Heart right ventricle (tissue), 16 donors: ENCODE measurements at regions of chr6 and their contacts with region 1.

Region 1: GRCh38 chr6:116349216-116349615 is 21.5 kb upstream of the DSE start:
- DNase-seq: no peak
- ATAC-seq: no peak
- H3K4me3 ChIP-seq: no peak overlapping the region
- H3K27ac ChIP-seq: no peak overlapping the region
- H3K4me1 ChIP-seq: peaks cover 0 to 27% (median 16%) of the 10 kb centered on the region in 9 donors
- H3K27me3 ChIP-seq: no peaks in the 10 kb centered on the region
- CTCF ChIP-seq: no peak

Region 2: DNA sequence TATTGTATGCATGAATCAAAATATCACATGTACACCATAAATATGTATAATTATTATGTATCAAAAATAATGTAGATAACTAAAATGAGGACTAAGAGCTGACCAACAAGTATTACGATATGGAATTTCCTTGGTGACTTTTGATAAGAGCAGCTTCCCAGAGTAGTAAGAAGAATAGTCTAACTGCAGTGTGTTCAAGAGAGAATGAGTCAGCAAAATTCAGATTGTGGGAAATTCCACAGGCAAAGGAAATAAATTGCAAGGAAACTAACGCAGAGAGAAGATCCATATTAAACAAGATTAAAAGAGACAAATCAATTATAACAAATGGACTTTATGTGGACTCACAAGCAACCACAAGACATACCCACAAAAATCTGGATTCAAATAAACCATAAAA is 314.9 kb before region 1 on chr6:
- intact Hi-C with region 1: no loop called
- DNase-seq: no peak
- ATAC-seq: peak in 3 of 8 donors; percentile 38 to 49 (median 42)
- H3K4me3 ChIP-seq: no peak overlapping the region
- H3K27ac ChIP-seq: peak overlapping the region in 1 of 10 donors; percentile 27
- H3K4me1 ChIP-seq: peaks cover 0 to 50% (median 22%) of the 10 kb centered on the region in 9 donors
- H3K27me3 ChIP-seq: no peaks in the 10 kb centered on the region
- CTCF ChIP-seq: no peak

Region 3: GRCh38 chr6:116268589-116269293 is 80.5 kb before region 1 on chr6:
- intact Hi-C with region 1: no loop called
- DNase-seq: no peak
- ATAC-seq: peak in 5 of 8 donors; percentile 55 to 80 (median 68)
- H3K4me3 ChIP-seq: no peak overlapping the region
- H3K27ac ChIP-seq: no peak overlapping the region
- H3K4me1 ChIP-seq: peaks cover 0 to 20% (median 6%) of the 10 kb centered on the region in 9 donors
- H3K27me3 ChIP-seq: no peaks in the 10 kb centered on the region
- CTCF ChIP-seq: peak; percentile 39 to 87 (median 66)

Region 4: DNA sequence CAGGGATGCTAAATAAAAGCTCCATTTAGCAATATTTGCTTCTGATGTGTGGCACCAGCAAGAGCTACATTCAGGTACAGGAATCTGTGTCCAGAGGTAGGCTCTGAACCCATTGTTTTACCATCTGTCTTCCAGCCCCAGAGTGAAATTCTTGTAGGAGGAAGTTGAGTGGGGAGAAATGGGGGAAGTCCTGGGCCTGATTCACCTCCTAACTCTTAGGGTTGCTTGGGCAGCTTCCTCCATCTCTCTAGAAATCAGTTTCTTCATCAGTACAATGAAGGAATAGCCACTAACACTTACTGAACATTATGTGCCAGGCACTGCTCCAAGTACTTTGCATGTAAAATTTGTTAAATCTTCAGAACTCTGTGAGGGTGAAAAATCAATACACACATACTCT is 34.3 kb before region 1 on chr6:
- intact Hi-C with region 1: loop called in 1 of 10 experiments (anchors 1 kb)
- DNase-seq: no peak
- ATAC-seq: peak in 2 of 8 donors; percentile 43 to 69
- H3K4me3 ChIP-seq: no peak overlapping the region
- H3K27ac ChIP-seq: peak overlapping the region in 1 of 10 donors; percentile 37
- H3K4me1 ChIP-seq: peaks cover 0 to 30% (median 21%) of the 10 kb centered on the region in 9 donors
- H3K27me3 ChIP-seq: no peaks in the 10 kb centered on the region
- CTCF ChIP-seq: no peak

Region 5: GRCh38 chr6:117463762-117464665 is 1114.8 kb after region 1 on chr6:
- intact Hi-C with region 1: no loop called
- DNase-seq: no peak
- ATAC-seq: no peak
- H3K4me3 ChIP-seq: no peak overlapping the region
- H3K27ac ChIP-seq: no peak overlapping the region
- H3K4me1 ChIP-seq: no peaks in the 10 kb centered on the region
- H3K27me3 ChIP-seq: peaks cover 0 to 3% (median 0%) of the 10 kb centered on the region in 7 donors
- CTCF ChIP-seq: no peak